PC-9 (cell line): ENCODE measurements at regions of chr1 and their contacts with region 1.

Region 1: GRCh38 chr1:233333086-233333485 is 5.6 kb downstream of the MAP3K21 start:
- DNase-seq: no peak
- H3K4me3 ChIP-seq: no peak overlapping the region
- H3K27ac ChIP-seq: no peak overlapping the region
- H3K4me1 ChIP-seq: peaks cover 25% of the 10 kb centered on the region
- H3K27me3 ChIP-seq: no peaks in the 10 kb centered on the region
- CTCF ChIP-seq: no peak

Region 2: GRCh38 chr1:233355841-233356704 is 23.0 kb after region 1 on chr1:
- CTCF ChIA-PET with region 1: interaction called, 10 read pairs
- POLR2A ChIA-PET with region 1: interaction called, 4 read pairs
- intact Hi-C with region 1: no loop called
- DNase-seq: no peak
- H3K4me3 ChIP-seq: no peak overlapping the region
- H3K27ac ChIP-seq: no peak overlapping the region
- H3K4me1 ChIP-seq: no peaks in the 10 kb centered on the region
- H3K27me3 ChIP-seq: no peaks in the 10 kb centered on the region
- CTCF ChIP-seq: no peak